HepG2 (cell line): ENCODE measurements at regions of chr17 and their contacts with region 1.

Region 1: GRCh38 chr17:42720996-42721583 is 23.8 kb downstream of the EZH1 start:
- DNase-seq: peak; percentile 83
- ATAC-seq: peak; percentile 90
- H3K4me3 ChIP-seq: no peak overlapping the region
- H3K27ac ChIP-seq: no peak overlapping the region
- H3K4me1 ChIP-seq: no peaks in the 10 kb centered on the region
- H3K27me3 ChIP-seq: no peaks in the 10 kb centered on the region
- CTCF ChIP-seq: peak; percentile 86
- EP300 ChIP-seq: no peak
- POLR2A ChIP-seq: no peak
- RAD21 ChIP-seq: peak; percentile 93

Region 2: GRCh38 chr17:42679492-42680330 is 41.4 kb before region 1 on chr17:
- CTCF ChIA-PET with region 1: no interaction called
- POLR2A ChIA-PET with region 1: no interaction called
- in situ Hi-C with region 1: no loop called
- intact Hi-C with region 1: no loop called
- DNase-seq: no peak
- ATAC-seq: no peak
- H3K4me3 ChIP-seq: 0 out of 6 replicates have a peak overlapping the region, but pooled peaks of 1 of the 3 experiments have one; percentile 88
- H3K27ac ChIP-seq: peak overlapping the region; percentile 35
- H3K4me1 ChIP-seq: peaks cover 54% of the 10 kb centered on the region
- H3K27me3 ChIP-seq: no peaks in the 10 kb centered on the region
- CTCF ChIP-seq: no peak
- EP300 ChIP-seq: no peak
- POLR2A ChIP-seq: no peak
- RAD21 ChIP-seq: no peak

Region 3: GRCh38 chr17:42744806-42745617 is 23.9 kb after region 1 on chr17 and contains the start of gene EZH1:
- CTCF ChIA-PET with region 1: no interaction called
- POLR2A ChIA-PET with region 1: no interaction called
- in situ Hi-C with region 1: no loop called
- intact Hi-C with region 1: no loop called
- DNase-seq: peak; percentile 91
- ATAC-seq: peak; percentile 89
- H3K4me3 ChIP-seq: peak within 1 kb of the TSS; percentile 58 to 84 (median 76)
- H3K27ac ChIP-seq: peak within 1 kb of the TSS; percentile 83
- H3K4me1 ChIP-seq: peaks cover 62% of the 10 kb centered on the region
- H3K27me3 ChIP-seq: no peaks in the 10 kb centered on the region
- CTCF ChIP-seq: no peak; the same call in 1 of the 2 replicates
- EP300 ChIP-seq: peak; percentile 3 to 45; a peak in 1 of 4 replicates
- POLR2A ChIP-seq: peak; percentile 62 to 64; a peak in 3 of 4 replicates
- RAD21 ChIP-seq: no peak
- total RNA-seq, gene EZH1: 6.0 and 11.6 TPM in 2 replicates

Region 4: GRCh38 chr17:42937712-42938596 is 216.9 kb after region 1 on chr17:
- CTCF ChIA-PET with region 1: interaction called, 8 read pairs
- POLR2A ChIA-PET with region 1: no interaction called
- in situ Hi-C with region 1: loop called (anchors 10 kb)
- intact Hi-C with region 1: loop called (anchors 1 kb)
- DNase-seq: peak; percentile 73
- ATAC-seq: peak; percentile 88
- H3K4me3 ChIP-seq: no peak overlapping the region
- H3K27ac ChIP-seq: no peak overlapping the region
- H3K4me1 ChIP-seq: peaks cover 46% of the 10 kb centered on the region
- H3K27me3 ChIP-seq: no peaks in the 10 kb centered on the region; a peak in 2 of 5 replicates
- CTCF ChIP-seq: peak; percentile 93
- EP300 ChIP-seq: no peak
- POLR2A ChIP-seq: no peak
- RAD21 ChIP-seq: peak; percentile 96

Region 5: GRCh38 chr17:42944211-42944610 is 223.1 kb after region 1 on chr17:
- CTCF ChIA-PET with region 1: no interaction called
- POLR2A ChIA-PET with region 1: no interaction called
- in situ Hi-C with region 1: loop called (anchors 10 kb)
- intact Hi-C with region 1: no loop called
- DNase-seq: no peak
- ATAC-seq: no peak
- H3K4me3 ChIP-seq: no peak overlapping the region
- H3K27ac ChIP-seq: no peak overlapping the region
- H3K4me1 ChIP-seq: peaks cover 21% of the 10 kb centered on the region
- H3K27me3 ChIP-seq: no peaks in the 10 kb centered on the region; a peak in 1 of 5 replicates
- CTCF ChIP-seq: no peak
- EP300 ChIP-seq: no peak
- POLR2A ChIP-seq: no peak
- RAD21 ChIP-seq: no peak